Activated naive CD4-positive, alpha-beta T cell treated with anti-CD3 and anti-CD28 coated beads for 36 hours (primary cell): ENCODE measurements at regions of chr14 and their contacts with region 1.

Region 1: GRCh38 chr14:70887207-70887681 is 20.0 kb upstream of the PCNX1 start:
- DNase-seq: peak; percentile 41
- H3K4me3 Mint-ChIP-seq: peak overlapping the region; percentile 39
- H3K27ac Mint-ChIP-seq: peak overlapping the region; percentile 92
- H3K4me1 Mint-ChIP-seq: peaks cover 74% of the 10 kb centered on the region
- H3K27me3 Mint-ChIP-seq: peaks cover 2% of the 10 kb centered on the region

Region 2: DNA sequence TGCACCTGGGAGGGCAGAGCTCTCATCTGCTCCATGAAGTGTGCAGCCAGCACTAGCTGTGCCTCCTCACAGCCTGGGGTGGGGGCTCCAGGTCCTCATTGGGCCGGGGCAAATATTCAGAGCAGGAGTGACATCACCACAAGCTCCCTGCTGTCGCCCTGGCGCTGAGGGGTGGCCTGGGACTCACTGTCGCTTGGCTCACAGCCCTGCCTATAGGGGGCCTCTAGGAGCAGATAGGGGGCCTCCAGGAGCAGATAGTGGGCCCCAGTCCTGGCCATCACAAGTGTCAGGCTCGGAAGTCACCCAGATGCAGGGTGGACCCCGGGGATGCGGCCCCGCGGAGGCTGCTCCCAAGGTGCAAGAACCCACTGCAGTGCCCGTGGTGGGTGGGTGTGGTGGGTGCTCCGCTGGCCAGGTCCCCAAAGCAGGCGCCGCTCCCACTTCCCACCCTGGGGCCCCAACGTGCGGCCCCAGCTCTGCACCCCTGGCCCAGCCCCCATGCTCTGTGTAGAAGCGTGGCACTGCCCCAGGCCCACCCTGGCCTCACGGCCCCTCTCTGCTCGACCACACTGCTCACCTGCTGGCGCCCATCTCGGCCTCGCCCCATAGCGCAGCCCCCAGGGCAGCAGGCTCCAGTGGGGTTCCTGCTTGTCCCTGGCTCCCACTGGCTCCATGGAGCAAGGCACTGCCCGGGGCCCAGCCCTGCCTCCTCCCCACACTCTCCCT is 488.4 kb before region 1 on chr14:
- CTCF ChIA-PET with region 1: no interaction called
- intact Hi-C with region 1: no loop called
- DNase-seq: no peak
- H3K4me3 Mint-ChIP-seq: no peak overlapping the region
- H3K27ac Mint-ChIP-seq: no peak overlapping the region
- H3K4me1 Mint-ChIP-seq: peaks cover 3% of the 10 kb centered on the region
- H3K27me3 Mint-ChIP-seq: no peaks in the 10 kb centered on the region

Region 3: GRCh38 chr14:70655110-70655826 is 232.0 kb before region 1 on chr14:
- CTCF ChIA-PET with region 1: no interaction called
- intact Hi-C with region 1: loop called (anchors 2 kb)
- DNase-seq: peak; percentile 92
- H3K4me3 Mint-ChIP-seq: peak overlapping the region; percentile 83
- H3K27ac Mint-ChIP-seq: peak overlapping the region; percentile 98
- H3K4me1 Mint-ChIP-seq: peaks cover 81% of the 10 kb centered on the region
- H3K27me3 Mint-ChIP-seq: no peaks in the 10 kb centered on the region

Region 4: DNA sequence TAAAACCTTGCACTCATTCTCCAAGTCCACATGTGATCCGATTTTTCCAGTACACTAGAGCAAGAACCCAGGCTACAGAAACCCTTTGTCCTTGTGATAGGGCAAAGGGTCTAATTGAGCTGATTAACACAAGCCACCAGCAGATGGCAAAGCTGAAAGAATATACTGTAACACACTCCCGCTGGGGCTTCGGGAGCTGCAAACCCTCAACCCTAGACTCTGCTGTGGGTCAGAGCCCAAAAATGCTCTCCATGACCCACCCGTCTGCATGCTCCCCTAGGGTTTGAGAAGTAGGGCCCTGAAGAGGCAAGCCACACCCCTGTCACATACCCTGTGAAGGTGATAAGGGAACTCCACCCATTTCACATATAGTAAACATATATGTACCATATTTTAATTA is 13.6 kb before region 1 on chr14:
- CTCF ChIA-PET with region 1: interaction called, 4 read pairs
- intact Hi-C with region 1: loop called (anchors 1 kb)
- DNase-seq: peak; percentile 32
- H3K4me3 Mint-ChIP-seq: no peak overlapping the region
- H3K27ac Mint-ChIP-seq: no peak overlapping the region
- H3K4me1 Mint-ChIP-seq: peaks cover 20% of the 10 kb centered on the region
- H3K27me3 Mint-ChIP-seq: no peaks in the 10 kb centered on the region

Region 5: GRCh38 chr14:70919774-70920173 is 32.5 kb after region 1 on chr14:
- CTCF ChIA-PET with region 1: interaction called, 8 read pairs
- intact Hi-C with region 1: loop called (anchors 1 kb)
- DNase-seq: peak; percentile 48
- H3K4me3 Mint-ChIP-seq: peak overlapping the region; percentile 30
- H3K27ac Mint-ChIP-seq: peak overlapping the region; percentile 83
- H3K4me1 Mint-ChIP-seq: peaks cover 84% of the 10 kb centered on the region
- H3K27me3 Mint-ChIP-seq: no peaks in the 10 kb centered on the region

Region 6: GRCh38 chr14:70972107-70972976 is 85.1 kb after region 1 on chr14:
- CTCF ChIA-PET with region 1: interaction called, 5 read pairs
- intact Hi-C with region 1: loop called (anchors 1 kb)
- DNase-seq: peak; percentile 95
- H3K4me3 Mint-ChIP-seq: no peak overlapping the region
- H3K27ac Mint-ChIP-seq: peak overlapping the region; percentile 33
- H3K4me1 Mint-ChIP-seq: peaks cover 30% of the 10 kb centered on the region
- H3K27me3 Mint-ChIP-seq: no peaks in the 10 kb centered on the region

Region 7: GRCh38 chr14:71060825-71061455 is 173.7 kb after region 1 on chr14:
- CTCF ChIA-PET with region 1: no interaction called
- intact Hi-C with region 1: no loop called
- DNase-seq: no peak
- H3K4me3 Mint-ChIP-seq: no peak overlapping the region
- H3K27ac Mint-ChIP-seq: peak overlapping the region; percentile 59
- H3K4me1 Mint-ChIP-seq: peaks cover 5% of the 10 kb centered on the region
- H3K27me3 Mint-ChIP-seq: no peaks in the 10 kb centered on the region

Region 8: DNA sequence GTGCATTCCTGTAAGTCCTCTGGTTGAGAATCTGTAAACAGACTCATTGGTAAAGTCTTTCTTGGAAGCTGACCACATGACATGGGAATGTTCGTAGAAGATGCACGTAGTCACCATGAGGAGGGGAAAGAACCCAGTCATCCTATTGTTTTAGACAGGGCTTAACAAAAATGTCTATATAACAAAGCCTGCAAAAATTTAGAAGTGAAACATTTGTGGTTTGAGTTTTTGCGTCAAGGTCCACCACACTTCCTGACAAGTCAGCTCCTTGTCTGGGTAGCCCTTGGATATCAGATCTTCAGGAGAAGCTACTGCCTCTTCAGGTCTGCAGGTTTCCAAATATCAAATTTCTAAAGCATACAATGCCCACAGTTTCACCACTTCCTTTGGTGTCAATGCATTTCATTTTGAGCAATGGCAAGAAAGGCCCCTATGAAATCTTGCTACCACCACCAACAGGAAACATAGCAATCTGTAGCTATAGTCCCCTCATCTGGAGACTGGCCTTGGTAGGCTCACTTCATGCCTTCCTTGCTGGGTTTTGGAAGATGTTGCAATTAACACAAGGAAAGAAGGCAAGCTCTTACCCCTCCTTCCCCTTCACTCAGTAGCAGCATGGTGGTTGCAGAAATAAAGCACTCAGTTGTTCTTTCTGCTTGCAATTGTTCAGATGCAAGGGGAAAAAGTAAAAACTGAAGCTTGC is 255.2 kb after region 1 on chr14:
- CTCF ChIA-PET with region 1: no interaction called
- intact Hi-C with region 1: no loop called
- DNase-seq: no peak
- H3K4me3 Mint-ChIP-seq: no peak overlapping the region
- H3K27ac Mint-ChIP-seq: peak overlapping the region; percentile 5
- H3K4me1 Mint-ChIP-seq: peaks cover 18% of the 10 kb centered on the region
- H3K27me3 Mint-ChIP-seq: no peaks in the 10 kb centered on the region